ENCODE measurements at regions of chr3 and their contacts with region 1.

Region 1: GRCh38 chr3:40584625-40585189 is 59.9 kb downstream of the ZNF621 start:
- DNase-seq: peak; percentile 96
- ATAC-seq: peak; percentile 96

Region 2: DNA sequence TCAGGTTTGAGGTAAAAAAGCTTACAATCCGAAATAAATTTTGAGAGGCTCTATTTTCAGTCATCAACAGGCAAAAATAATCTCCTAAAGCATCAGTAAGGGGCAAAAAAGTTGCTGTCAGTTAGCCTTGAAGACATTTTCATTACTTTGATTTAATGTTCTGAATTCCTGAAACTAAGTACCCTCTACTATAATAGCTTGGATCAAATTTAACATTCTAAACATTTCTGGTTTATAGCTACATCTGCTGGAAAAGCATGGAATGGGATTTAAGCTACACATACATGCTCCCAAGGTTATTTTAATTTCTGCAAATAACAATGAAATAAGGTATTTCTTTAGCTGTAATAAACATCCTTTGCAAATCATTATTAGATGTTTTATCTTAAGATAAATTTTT is 1131.8 kb after region 1 on chr3:
- intact Hi-C with region 1: loop called (anchors 5 kb)
- DNase-seq: no peak
- ATAC-seq: no peak

Region 3: DNA sequence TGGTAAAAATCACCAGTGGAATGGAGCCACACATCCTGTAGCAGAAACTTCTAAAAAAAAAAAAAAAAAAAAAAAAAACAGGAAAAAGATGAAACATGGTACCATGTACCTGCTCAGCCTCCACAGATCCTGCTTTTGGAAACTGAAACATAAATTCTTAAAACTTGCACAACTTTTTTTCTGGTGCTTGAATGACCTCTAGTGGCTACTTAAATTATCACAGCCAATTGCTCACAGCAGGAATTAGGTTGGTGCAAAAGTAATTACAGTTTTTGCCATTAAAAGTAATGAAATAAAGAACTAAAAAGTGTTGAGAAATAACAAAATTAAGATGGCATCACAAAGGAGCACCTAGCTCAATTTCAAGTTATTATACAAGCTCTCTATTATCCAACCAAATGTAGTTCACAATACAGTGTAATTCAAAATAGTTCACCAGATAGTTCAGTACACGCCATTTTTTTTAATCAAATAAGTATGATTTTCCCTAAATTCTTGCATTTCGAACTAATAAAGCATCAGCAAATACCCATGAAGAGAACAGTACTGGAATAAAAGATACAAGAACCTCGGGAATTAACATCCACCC is 1296.6 kb after region 1 on chr3:
- intact Hi-C with region 1: loop called (anchors 5 kb)
- DNase-seq: no peak
- ATAC-seq: no peak